A673 (cell line): ENCODE measurements at regions of chr3 and their contacts with region 1.

Region 1: DNA sequence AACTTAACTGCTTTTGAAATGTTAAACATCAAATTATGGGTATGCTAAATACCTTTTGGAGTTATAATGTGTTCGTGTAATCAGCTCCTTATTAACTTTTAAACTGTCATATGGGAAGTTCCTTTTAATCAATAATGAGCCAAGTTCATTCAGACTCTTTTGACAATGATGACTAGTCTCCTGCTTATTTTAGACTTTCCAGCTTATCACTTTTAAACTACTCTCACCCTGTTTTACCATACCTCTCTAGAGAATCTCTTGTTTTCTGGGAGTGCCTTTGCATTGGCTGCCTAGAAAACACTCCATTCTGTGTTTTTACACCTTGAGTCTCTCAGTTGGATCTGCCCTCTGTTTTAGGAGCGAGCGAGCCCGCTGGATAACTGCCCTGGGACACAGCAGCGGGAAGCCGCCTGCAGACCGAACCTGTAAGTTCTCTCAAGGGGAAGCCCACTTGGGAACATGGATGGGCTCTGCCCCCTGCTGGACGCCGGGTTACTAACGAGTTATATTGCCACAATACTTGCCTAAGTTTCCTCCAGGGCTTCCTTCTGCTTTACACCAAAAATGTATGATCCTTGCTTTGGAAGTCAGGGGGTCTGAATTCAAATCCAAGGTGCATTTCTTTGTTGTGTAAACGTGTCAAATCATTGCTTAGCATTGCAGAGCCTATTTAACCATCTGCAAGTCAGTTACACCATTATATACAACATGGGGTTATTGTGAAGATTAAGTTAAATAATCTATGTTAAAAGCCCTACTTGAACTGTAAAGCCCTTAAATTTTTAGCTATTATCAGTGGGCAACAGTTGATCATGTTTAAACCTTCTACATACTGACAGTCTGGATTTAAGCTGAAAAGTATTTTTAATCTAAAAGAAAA is 71.3 kb downstream of the DHX36 start:
- DNase-seq: peak; percentile 87
- H3K4me3 ChIP-seq: no peak overlapping the region
- H3K27ac ChIP-seq: no peak overlapping the region
- H3K4me1 ChIP-seq: peaks cover 11% of the 10 kb centered on the region
- H3K27me3 ChIP-seq: no peaks in the 10 kb centered on the region
- CTCF ChIP-seq: peak; percentile 91

Region 2: DNA sequence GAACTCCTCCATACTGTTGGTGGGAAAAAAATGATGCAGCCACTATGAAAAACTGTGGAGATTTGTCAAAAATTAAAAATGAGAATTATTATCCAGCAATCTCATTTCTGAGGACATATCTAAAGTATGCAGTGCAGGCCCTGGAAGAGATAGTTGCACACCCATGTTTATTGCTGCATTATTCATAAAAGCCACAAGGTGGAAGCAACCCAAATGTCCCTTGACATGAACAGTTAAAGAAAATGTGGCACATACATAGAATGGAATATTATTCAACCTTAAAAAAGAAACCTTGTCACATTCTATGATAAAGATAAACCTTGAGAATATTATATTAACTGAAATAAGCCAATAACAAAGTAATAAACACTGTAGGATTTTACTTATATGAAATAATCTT is 212.7 kb before region 1 on chr3:
- CTCF ChIA-PET with region 1: no interaction called
- POLR2A ChIA-PET with region 1: no interaction called
- intact Hi-C with region 1: loop called (anchors 5 kb)
- DNase-seq: peak; percentile 48
- H3K4me3 ChIP-seq: no peak overlapping the region
- H3K27ac ChIP-seq: no peak overlapping the region
- H3K4me1 ChIP-seq: no peaks in the 10 kb centered on the region
- H3K27me3 ChIP-seq: no peaks in the 10 kb centered on the region
- CTCF ChIP-seq: peak; percentile 61

Region 3: DNA sequence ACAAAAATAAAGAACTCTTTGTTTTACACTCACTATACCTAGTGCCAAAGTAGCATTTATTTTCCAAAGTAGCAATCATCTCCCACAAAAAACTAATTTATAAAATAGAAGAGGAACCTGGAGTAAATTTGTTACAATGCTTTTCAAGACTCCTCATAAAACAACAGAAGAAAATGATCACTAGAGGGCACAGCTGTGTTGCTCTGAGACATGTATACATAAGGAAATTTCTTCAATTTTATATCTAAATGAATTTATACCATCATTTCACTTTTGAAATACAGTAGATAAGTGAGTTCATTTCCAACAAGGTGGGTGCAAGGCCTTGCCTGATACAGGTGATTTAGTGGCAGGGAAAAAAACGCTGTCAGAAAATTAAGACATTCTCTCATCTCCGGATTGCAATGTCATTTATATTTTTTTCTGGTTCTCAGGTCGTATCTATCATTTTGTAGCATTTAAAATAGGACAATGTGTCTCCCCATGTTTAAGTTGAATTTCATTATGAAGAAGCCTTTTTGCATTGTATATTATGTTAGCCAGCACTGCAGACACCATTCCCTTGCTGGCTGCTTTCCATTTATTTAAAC is 157.1 kb before region 1 on chr3:
- CTCF ChIA-PET with region 1: no interaction called
- POLR2A ChIA-PET with region 1: no interaction called
- intact Hi-C with region 1: loop called (anchors 1 kb)
- DNase-seq: peak; percentile 19
- H3K4me3 ChIP-seq: no peak overlapping the region
- H3K27ac ChIP-seq: no peak overlapping the region
- H3K4me1 ChIP-seq: no peaks in the 10 kb centered on the region
- H3K27me3 ChIP-seq: no peaks in the 10 kb centered on the region
- CTCF ChIP-seq: peak; percentile 56